ENCODE measurements at regions of chr1 and their contacts with region 1.

Region 1: DNA sequence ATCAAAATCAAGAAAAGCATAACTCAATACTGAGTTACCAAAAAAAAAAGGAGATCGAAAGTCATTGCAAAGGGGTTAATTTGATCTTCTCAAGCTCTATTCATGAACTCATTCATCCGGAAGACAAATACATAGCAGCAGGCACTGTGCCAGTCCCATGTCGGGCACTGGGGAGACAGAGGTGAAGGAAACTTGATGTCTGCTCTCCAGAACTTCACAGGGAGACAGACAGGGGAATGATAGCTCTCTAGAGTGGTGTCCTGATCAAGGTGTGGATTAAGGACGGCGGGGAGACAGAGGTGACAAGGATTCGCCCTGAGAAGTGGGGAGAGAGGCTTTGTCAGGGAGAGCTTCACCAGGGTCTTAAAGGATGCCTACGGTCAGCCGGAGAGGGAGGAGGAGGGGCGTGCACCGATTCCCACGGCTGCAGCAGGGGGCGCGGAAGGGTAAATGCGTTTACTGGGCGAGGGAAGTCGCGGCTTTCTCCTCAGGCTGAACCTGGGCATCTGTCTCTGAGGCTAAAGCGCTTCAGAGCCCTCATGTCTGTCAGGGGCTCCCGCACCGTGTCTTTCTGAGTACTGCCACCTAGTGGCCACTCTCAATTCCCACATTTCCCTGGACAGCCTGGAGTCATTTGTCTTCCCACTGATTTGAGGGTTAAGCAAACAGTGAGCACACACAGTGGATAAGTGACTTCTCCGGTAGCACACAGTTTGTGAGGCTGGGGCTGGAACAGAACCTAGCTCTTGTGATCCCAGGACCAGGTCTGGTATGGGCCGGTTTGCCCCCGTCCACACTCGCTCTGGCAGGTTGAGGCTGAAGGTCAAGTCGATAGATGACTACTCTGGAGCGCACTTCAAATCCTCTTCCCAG is 152.8 kb downstream of the TENT5C start:
- DNase-seq: peak; percentile 73
- H3K4me3 Mint-ChIP-seq: peak overlapping the region; percentile 66
- H3K27ac Mint-ChIP-seq: no peak overlapping the region
- H3K4me1 Mint-ChIP-seq: peaks cover 17% of the 10 kb centered on the region
- H3K27me3 Mint-ChIP-seq: peaks cover 13% of the 10 kb centered on the region

Region 2: GRCh38 chr1:117512743-117513321 is 245.8 kb before region 1 on chr1:
- CTCF ChIA-PET with region 1: interaction called, 102 read pairs
- POLR2A ChIA-PET with region 1: interaction called, 3 read pairs
- DNase-seq: no peak
- H3K4me3 Mint-ChIP-seq: no peak overlapping the region
- H3K27ac Mint-ChIP-seq: no peak overlapping the region
- H3K4me1 Mint-ChIP-seq: no peaks in the 10 kb centered on the region
- H3K27me3 Mint-ChIP-seq: no peaks in the 10 kb centered on the region

Region 3: DNA sequence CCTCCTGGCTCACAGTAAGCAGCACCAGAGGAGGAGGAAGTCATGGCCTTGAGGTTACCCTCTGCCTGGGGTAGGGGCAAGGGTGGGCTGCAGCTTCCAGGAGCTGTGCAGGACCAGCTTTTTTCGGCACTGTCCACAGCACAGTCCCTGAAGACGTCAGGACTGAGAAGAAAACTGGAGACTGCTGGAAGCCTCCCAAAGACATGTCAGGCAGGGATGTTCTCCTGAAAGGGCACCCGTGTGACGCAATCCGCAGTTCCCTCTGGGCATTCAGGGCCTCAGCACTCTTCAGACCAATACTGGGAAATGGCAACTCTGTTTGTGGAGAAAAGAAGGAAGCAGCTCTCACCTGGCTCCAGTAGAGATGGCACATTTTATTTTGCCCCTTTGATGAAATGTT is 217.7 kb before region 1 on chr1:
- CTCF ChIA-PET with region 1: interaction called, 220 read pairs
- POLR2A ChIA-PET with region 1: interaction called, 3 read pairs
- DNase-seq: no peak
- H3K4me3 Mint-ChIP-seq: no peak overlapping the region
- H3K27ac Mint-ChIP-seq: no peak overlapping the region
- H3K4me1 Mint-ChIP-seq: peaks cover 21% of the 10 kb centered on the region
- H3K27me3 Mint-ChIP-seq: no peaks in the 10 kb centered on the region

Region 4: GRCh38 chr1:117632269-117633067 is 126.2 kb before region 1 on chr1:
- CTCF ChIA-PET with region 1: interaction called, 14 read pairs
- POLR2A ChIA-PET with region 1: no interaction called
- DNase-seq: no peak
- H3K4me3 Mint-ChIP-seq: no peak overlapping the region
- H3K27ac Mint-ChIP-seq: peak overlapping the region; percentile 67
- H3K4me1 Mint-ChIP-seq: peaks cover 65% of the 10 kb centered on the region
- H3K27me3 Mint-ChIP-seq: no peaks in the 10 kb centered on the region

Region 5: DNA sequence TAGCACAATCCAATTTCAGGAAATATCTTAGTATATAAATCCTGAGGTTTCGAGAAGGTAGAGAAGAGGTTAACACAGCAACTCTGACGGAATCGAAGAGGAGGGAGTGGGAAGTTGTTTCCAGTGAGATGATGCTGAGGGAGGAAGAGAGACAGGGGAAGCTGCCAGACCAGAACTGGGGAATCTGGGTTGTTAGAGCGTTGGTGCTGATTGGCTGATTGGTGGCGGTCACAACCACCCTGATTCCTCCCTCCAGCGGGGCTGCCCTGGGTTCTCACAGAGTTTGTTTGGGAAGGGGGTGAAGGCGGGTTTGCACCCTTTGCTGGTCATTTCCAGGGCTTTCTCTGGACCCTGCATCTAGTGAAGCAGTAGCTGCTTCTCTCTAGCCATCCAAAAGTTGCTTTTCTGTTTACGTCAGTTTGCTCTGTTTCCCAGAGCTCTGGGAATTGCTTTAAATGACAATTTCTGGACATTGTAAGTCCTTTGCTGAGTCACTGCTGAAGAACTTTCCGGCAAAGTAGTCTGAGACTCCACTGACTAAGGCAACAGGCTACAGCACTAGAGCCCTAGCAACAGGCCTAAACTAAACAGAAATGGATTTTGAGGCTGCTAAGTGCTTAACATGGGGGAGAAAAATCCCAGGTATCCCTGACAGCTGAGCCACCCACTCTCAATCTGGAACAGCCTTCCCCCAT is 62.7 kb before region 1 on chr1:
- CTCF ChIA-PET with region 1: interaction called, 14 read pairs
- POLR2A ChIA-PET with region 1: no interaction called
- DNase-seq: no peak
- H3K4me3 Mint-ChIP-seq: no peak overlapping the region
- H3K27ac Mint-ChIP-seq: no peak overlapping the region
- H3K4me1 Mint-ChIP-seq: peaks cover 26% of the 10 kb centered on the region
- H3K27me3 Mint-ChIP-seq: peaks cover 3% of the 10 kb centered on the region

Region 6: DNA sequence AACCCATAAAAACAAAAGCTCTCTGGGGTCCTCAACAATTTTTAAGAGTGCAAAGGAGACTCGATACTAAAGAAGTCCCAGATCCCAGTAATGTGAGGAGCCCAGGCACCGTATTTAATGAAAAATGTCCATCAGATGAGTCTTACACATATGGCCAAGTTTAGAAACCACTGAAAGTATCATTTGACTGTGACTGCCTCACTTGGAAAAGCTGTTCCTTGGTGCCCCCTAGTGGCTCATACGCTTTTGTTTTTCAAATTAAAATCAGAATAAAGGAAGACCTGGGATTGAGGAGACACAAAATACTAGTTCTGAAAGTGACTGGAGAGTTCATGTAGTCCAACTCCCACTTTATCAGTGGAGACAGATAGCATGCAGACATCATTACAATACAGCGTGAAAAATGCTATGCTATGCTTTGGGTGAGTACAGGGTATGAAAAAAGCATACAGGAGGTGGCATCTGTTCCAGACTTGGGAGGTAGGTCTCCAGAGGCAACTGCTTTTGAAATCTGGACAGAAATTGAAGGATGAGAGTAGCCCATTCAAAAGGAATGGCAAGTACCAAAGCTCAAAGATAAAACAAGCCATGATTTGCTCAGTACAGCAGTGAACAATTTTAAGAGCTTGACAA is 136.9 kb after region 1 on chr1:
- CTCF ChIA-PET with region 1: interaction called, 20 read pairs
- POLR2A ChIA-PET with region 1: no interaction called
- DNase-seq: peak; percentile 65
- H3K4me3 Mint-ChIP-seq: no peak overlapping the region
- H3K27ac Mint-ChIP-seq: no peak overlapping the region
- H3K4me1 Mint-ChIP-seq: no peaks in the 10 kb centered on the region
- H3K27me3 Mint-ChIP-seq: no peaks in the 10 kb centered on the region

Measured in activated CD4-positive, alpha-beta memory T cell treated with anti-CD3 and anti-CD28 coated beads, Interleukin-2, amount 10 ng/mL, durations not matched to agents 7 days and 5 days (primary cell).